Activated CD8-positive, alpha-beta T cell treated with anti-CD3 and anti-CD28 coated beads, Interleukin-2, amount 10 ng/mL, durations not matched to agents 7 days and 5 days (primary cell): ENCODE measurements at regions of chr10 and their contacts with region 1.

Region 1: GRCh38 chr10:3785257-3785850 is 345 bp upstream of the KLF6 start:
- DNase-seq: peak; percentile 99
- ATAC-seq: peak; percentile 70
- H3K4me3 Mint-ChIP-seq: peak overlapping the region; percentile 95
- H3K27ac Mint-ChIP-seq: peak overlapping the region; percentile 98
- H3K4me1 Mint-ChIP-seq: peaks cover 43% of the 10 kb centered on the region
- H3K27me3 Mint-ChIP-seq: no peaks in the 10 kb centered on the region

Region 2: DNA sequence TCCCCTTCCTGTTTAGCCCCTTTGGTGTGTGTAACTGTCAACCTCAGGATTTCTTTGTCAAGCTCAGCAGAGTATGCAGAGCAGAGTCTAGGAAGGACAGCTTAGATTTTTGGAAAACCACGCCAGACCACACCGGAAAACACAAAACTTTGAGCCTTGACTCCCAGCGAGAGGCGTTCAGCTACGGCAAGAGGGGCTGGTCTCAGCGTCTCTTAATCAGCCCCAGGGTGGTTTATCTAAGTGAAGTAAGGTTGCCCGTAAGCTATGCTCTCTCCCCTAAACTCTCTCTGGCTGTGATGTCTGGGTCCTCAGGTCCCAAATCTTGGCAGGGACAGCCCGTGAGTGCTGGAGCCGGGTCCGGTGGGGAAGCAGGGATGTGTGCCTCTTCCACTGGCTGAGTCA is 231.2 kb before region 1 on chr10:
- CTCF ChIA-PET with region 1: no interaction called
- POLR2A ChIA-PET with region 1: no interaction called
- DNase-seq: peak; percentile 28
- ATAC-seq: peak; percentile 70
- H3K4me3 Mint-ChIP-seq: peak overlapping the region; percentile 7
- H3K27ac Mint-ChIP-seq: peak overlapping the region; percentile 56
- H3K4me1 Mint-ChIP-seq: peaks cover 14% of the 10 kb centered on the region
- H3K27me3 Mint-ChIP-seq: peaks cover 19% of the 10 kb centered on the region

Region 3: GRCh38 chr10:3647074-3647473 is 138.3 kb before region 1 on chr10:
- CTCF ChIA-PET with region 1: no interaction called
- POLR2A ChIA-PET with region 1: no interaction called
- DNase-seq: no peak
- ATAC-seq: no peak
- H3K4me3 Mint-ChIP-seq: no peak overlapping the region
- H3K27ac Mint-ChIP-seq: no peak overlapping the region
- H3K4me1 Mint-ChIP-seq: no peaks in the 10 kb centered on the region
- H3K27me3 Mint-ChIP-seq: peaks cover 28% of the 10 kb centered on the region

Region 4: DNA sequence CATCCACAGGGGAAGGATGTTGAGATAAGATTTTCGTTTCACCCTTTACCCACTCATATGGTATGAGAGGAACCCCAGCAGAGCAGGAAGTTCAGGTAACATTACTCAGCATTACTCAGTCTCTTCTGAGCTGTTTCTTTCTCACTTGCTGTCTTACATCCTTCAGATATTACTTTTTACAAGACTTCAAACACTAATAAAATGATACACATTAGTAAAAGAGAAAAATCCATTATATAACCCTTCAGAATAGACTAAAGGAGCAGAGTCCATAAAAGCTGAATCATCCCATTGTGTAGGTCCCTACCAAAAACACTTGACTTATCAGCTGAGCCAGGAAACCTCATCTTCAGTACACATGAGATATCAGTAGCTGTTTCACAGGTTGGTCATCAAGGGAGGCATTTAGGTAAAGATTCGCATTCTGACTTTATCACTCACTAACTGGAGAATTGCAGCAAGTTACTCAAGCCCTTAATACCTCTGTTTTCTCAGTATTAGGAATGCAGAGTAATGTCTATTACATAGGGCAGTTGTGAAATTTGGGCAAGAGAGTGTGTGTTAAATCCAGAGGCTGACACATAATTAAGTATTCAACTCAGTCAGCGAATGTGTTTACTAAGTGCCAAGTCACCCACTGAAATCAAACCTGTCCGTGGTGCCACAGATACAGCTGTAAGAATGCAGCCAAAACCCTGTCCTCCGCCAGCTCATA is 45.0 kb before region 1 on chr10:
- CTCF ChIA-PET with region 1: interaction called, 4 read pairs
- POLR2A ChIA-PET with region 1: interaction called, 13 read pairs
- DNase-seq: peak; percentile 19
- ATAC-seq: peak; percentile 42
- H3K4me3 Mint-ChIP-seq: no peak overlapping the region
- H3K27ac Mint-ChIP-seq: peak overlapping the region; percentile 60
- H3K4me1 Mint-ChIP-seq: peaks cover 22% of the 10 kb centered on the region
- H3K27me3 Mint-ChIP-seq: no peaks in the 10 kb centered on the region

Region 5: GRCh38 chr10:3820255-3820654 is 34.9 kb after region 1 on chr10:
- CTCF ChIA-PET with region 1: no interaction called
- POLR2A ChIA-PET with region 1: interaction called, 658 read pairs
- DNase-seq: no peak
- ATAC-seq: no peak
- H3K4me3 Mint-ChIP-seq: no peak overlapping the region
- H3K27ac Mint-ChIP-seq: no peak overlapping the region
- H3K4me1 Mint-ChIP-seq: peaks cover 15% of the 10 kb centered on the region
- H3K27me3 Mint-ChIP-seq: no peaks in the 10 kb centered on the region

Region 6: DNA sequence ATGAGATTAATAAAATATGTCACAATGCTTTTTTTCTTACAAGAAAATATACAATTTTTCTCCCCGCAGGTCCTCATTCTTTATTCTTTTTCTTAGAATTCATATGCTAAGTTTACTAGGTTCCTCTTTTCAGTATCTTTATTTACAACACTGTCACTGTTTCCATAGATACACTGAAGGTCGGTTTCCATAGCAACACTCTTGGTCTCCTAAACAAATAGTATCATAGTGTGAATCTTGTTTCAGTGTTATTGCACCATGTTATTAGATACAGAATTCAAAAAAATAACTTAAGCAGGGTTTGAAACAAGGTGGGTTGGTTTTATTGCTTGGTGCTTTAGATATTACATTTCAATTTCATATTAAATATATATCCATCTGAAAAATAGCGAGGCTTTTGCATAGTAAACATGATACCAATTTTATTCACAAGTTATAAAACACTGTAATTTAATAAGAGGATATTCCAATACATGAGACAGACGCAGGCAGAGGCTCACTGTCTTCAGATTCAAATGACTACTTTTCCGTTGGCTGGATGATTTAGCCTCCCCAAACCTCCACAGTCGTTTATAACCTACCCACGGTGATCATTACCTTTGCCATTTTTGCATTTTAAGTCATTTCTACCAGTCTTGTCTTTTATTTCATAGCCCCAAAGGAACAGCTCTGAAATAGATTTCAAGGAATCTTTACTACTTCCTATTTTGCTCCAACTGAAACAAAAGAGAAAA is 88.5 kb after region 1 on chr10:
- CTCF ChIA-PET with region 1: interaction called, 3 read pairs
- POLR2A ChIA-PET with region 1: interaction called, 131 read pairs
- DNase-seq: no peak
- ATAC-seq: peak; percentile 61
- H3K4me3 Mint-ChIP-seq: no peak overlapping the region
- H3K27ac Mint-ChIP-seq: peak overlapping the region; percentile 61
- H3K4me1 Mint-ChIP-seq: peaks cover 49% of the 10 kb centered on the region
- H3K27me3 Mint-ChIP-seq: no peaks in the 10 kb centered on the region

Region 7: GRCh38 chr10:3948843-3949242 is 163.5 kb after region 1 on chr10:
- CTCF ChIA-PET with region 1: interaction called, 4 read pairs
- POLR2A ChIA-PET with region 1: interaction called, 179 read pairs
- DNase-seq: peak; percentile 92
- ATAC-seq: peak; percentile 80
- H3K4me3 Mint-ChIP-seq: peak overlapping the region; percentile 79
- H3K27ac Mint-ChIP-seq: peak overlapping the region; percentile 97
- H3K4me1 Mint-ChIP-seq: peaks cover 88% of the 10 kb centered on the region
- H3K27me3 Mint-ChIP-seq: no peaks in the 10 kb centered on the region

Region 8: DNA sequence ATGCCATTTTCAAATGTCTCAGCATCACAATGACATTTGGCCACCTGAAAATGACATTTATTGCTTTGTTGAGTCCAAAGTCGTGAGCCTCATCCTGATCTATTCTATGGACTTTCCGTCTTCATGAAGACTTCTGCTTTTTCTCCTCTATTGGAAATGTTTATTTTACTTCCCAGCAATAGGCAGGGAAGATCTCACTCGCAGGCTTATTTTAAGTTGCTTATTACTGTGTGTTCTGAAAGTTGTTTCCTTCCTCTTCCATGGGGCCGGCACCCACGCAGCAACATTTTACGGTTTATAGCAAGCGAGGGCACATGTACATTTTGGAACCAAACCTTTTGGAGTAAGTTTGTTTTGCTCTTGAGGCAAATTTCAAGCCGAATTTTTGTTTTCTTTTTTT is 220.7 kb after region 1 on chr10:
- CTCF ChIA-PET with region 1: no interaction called
- POLR2A ChIA-PET with region 1: no interaction called
- DNase-seq: no peak
- ATAC-seq: no peak
- H3K4me3 Mint-ChIP-seq: no peak overlapping the region
- H3K27ac Mint-ChIP-seq: no peak overlapping the region
- H3K4me1 Mint-ChIP-seq: peaks cover 3% of the 10 kb centered on the region
- H3K27me3 Mint-ChIP-seq: no peaks in the 10 kb centered on the region

Region 9: GRCh38 chr10:4059471-4060138 is 274.3 kb after region 1 on chr10:
- CTCF ChIA-PET with region 1: no interaction called
- POLR2A ChIA-PET with region 1: interaction called, 10 read pairs
- DNase-seq: peak; percentile 59
- ATAC-seq: peak; percentile 90
- H3K4me3 Mint-ChIP-seq: peak overlapping the region; percentile 10
- H3K27ac Mint-ChIP-seq: peak overlapping the region; percentile 85
- H3K4me1 Mint-ChIP-seq: peaks cover 46% of the 10 kb centered on the region
- H3K27me3 Mint-ChIP-seq: no peaks in the 10 kb centered on the region